ENCODE measurements at regions of chr2 and their contacts with region 1.

Region 1: GRCh38 chr2:158619496-158619895 is 162.7 kb downstream of the PKP4 start:
- DNase-seq: peak; percentile 70
- ATAC-seq: peak; percentile 82
- H3K4me3 ChIP-seq: no peak overlapping the region
- H3K27ac ChIP-seq: peak overlapping the region; percentile 47
- H3K4me1 ChIP-seq: peaks cover 22% of the 10 kb centered on the region
- H3K27me3 ChIP-seq: no peaks in the 10 kb centered on the region
- CTCF ChIP-seq: no peak
- EP300 ChIP-seq: peak in 1 of 2 experiments; percentile 56; a peak in 1 of 4 replicates
- POLR2A ChIP-seq: no peak
- RAD21 ChIP-seq: no peak

Region 2: DNA sequence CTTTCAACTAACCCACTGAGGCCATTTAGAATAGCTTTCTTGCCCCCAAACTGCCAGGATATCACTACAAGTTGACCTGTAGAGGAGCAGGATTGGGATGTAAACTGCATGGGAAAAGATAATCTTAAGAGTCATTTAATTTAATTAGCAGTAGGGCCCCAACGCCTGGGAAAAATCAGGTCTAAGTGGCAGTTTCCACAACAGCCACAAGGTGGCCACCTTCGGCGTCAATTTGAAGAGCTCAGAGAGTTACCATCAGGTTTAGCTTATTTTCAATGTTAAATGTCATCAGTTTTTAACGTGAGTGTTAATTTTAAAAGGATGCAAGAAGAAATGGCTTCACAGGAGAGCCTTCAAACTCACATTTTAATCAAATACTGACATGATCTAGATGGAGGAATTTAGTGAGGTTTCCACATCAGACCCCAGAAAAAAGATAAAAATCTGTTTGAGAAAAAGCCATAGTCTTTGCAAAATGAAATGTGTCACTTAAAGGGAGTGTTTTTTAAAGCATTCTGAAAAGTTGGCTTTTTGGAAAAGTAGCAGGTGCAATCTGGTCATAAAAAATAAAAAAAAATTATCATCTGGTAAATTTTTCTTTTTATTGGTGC is 595.1 kb before region 1 on chr2:
- CTCF ChIA-PET with region 1: no interaction called
- POLR2A ChIA-PET with region 1: no interaction called
- in situ Hi-C with region 1: no loop called
- intact Hi-C with region 1: loop called (anchors 10 kb)
- DNase-seq: peak; percentile 29
- ATAC-seq: peak; percentile 77
- H3K4me3 ChIP-seq: no peak overlapping the region
- H3K27ac ChIP-seq: no peak overlapping the region
- H3K4me1 ChIP-seq: peaks cover 22% of the 10 kb centered on the region
- H3K27me3 ChIP-seq: 0 out of 5 replicates have a peak, but pooled peaks cover 1 to 6% of the 10 kb centered on the region in 2 experiments
- CTCF ChIP-seq: peak; percentile 86
- EP300 ChIP-seq: no peak
- POLR2A ChIP-seq: no peak
- RAD21 ChIP-seq: peak; percentile 76

Region 3: GRCh38 chr2:158539176-158540005 is 80.1 kb before region 1 on chr2:
- CTCF ChIA-PET with region 1: no interaction called
- POLR2A ChIA-PET with region 1: no interaction called
- in situ Hi-C with region 1: no loop called
- intact Hi-C with region 1: loop called (anchors 5 kb)
- DNase-seq: peak; percentile 93
- ATAC-seq: peak; percentile 89
- H3K4me3 ChIP-seq: no peak overlapping the region
- H3K27ac ChIP-seq: peak overlapping the region; percentile 36
- H3K4me1 ChIP-seq: peaks cover 38% of the 10 kb centered on the region
- H3K27me3 ChIP-seq: no peaks in the 10 kb centered on the region
- CTCF ChIP-seq: no peak
- EP300 ChIP-seq: peak in 1 of 2 experiments; percentile 56; a peak in 1 of 4 replicates
- POLR2A ChIP-seq: no peak
- RAD21 ChIP-seq: no peak

Region 4: GRCh38 chr2:158600155-158600802 is 19.2 kb before region 1 on chr2:
- CTCF ChIA-PET with region 1: no interaction called
- POLR2A ChIA-PET with region 1: no interaction called
- in situ Hi-C with region 1: no loop called
- intact Hi-C with region 1: no loop called
- DNase-seq: no peak
- ATAC-seq: no peak
- H3K4me3 ChIP-seq: no peak overlapping the region
- H3K27ac ChIP-seq: no peak overlapping the region
- H3K4me1 ChIP-seq: no peaks in the 10 kb centered on the region
- H3K27me3 ChIP-seq: no peaks in the 10 kb centered on the region
- CTCF ChIP-seq: no peak
- EP300 ChIP-seq: no peak
- POLR2A ChIP-seq: no peak
- RAD21 ChIP-seq: no peak

Region 5: GRCh38 chr2:158795195-158795924 is 175.9 kb after region 1 on chr2 and contains the start of gene DAPL1:
- CTCF ChIA-PET with region 1: no interaction called
- POLR2A ChIA-PET with region 1: no interaction called
- in situ Hi-C with region 1: no loop called
- intact Hi-C with region 1: no loop called
- DNase-seq: no peak
- ATAC-seq: no peak
- H3K4me3 ChIP-seq: no peak within 1 kb of the TSS
- H3K27ac ChIP-seq: no peak within 1 kb of the TSS
- H3K4me1 ChIP-seq: no peaks in the 10 kb centered on the region
- H3K27me3 ChIP-seq: peaks cover 4 to 32% of the 10 kb centered on the region in 2 experiments; a peak in 4 of 5 replicates
- CTCF ChIP-seq: no peak
- EP300 ChIP-seq: no peak
- POLR2A ChIP-seq: no peak
- RAD21 ChIP-seq: no peak
- total RNA-seq, gene DAPL1: not detected in 2 replicates

Measured in HepG2 (cell line).